A673 (cell line): ENCODE measurements at regions of chr11 and their contacts with region 1.

Region 1: DNA sequence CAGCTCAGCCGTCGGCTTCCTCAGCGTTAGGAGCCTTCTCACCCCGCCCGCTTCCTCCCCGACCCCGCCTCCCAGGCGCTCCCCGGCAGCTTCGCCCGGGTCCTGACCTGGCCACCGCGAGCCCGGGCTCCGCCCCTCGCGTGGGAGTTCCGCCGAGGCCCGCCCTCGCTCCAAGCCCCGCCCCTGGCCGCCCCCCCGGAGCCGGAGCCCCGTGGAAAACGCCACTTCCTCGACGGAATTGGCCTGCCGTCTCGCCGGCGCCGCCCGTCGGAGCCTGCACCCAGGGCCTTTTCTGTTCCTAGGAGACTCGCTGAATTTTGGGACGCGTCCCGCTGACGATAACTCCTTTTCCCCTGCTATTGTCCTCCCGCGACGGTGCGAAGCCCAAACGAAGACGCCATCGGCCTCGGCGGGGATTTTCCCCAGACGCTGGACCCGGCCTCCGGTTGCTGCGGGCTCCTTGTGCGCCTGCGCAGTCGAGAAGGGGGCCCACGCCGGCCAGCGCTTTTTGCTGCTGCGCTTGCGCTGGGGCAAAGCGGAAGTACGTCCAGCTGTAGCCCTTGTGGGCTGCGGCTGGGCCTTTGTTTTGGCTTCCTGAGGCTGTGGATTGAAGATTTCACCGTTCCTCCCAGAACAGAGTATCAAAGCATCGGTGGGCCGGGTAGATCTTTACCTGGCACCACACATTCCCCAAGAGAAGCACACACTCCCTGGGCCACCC is 10.0 kb downstream of the RELA start:
- DNase-seq: peak; percentile 97
- H3K4me3 ChIP-seq: peak overlapping the region; percentile 50
- H3K27ac ChIP-seq: peak overlapping the region; percentile 91
- H3K4me1 ChIP-seq: peaks cover 11% of the 10 kb centered on the region
- H3K27me3 ChIP-seq: no peaks in the 10 kb centered on the region
- CTCF ChIP-seq: no peak

Region 2: GRCh38 chr11:65555693-65556231 is 96.9 kb before region 1 on chr11:
- CTCF ChIA-PET with region 1: no interaction called
- POLR2A ChIA-PET with region 1: interaction called, 11 read pairs
- intact Hi-C with region 1: no loop called
- DNase-seq: no peak
- H3K4me3 ChIP-seq: no peak overlapping the region
- H3K27ac ChIP-seq: no peak overlapping the region
- H3K4me1 ChIP-seq: peaks cover 38% of the 10 kb centered on the region
- H3K27me3 ChIP-seq: no peaks in the 10 kb centered on the region
- CTCF ChIP-seq: no peak

Region 3: GRCh38 chr11:65575568-65576231 is 77.0 kb before region 1 on chr11 and contains the start of gene EHBP1L1:
- CTCF ChIA-PET with region 1: no interaction called
- POLR2A ChIA-PET with region 1: interaction called, 15 read pairs
- intact Hi-C with region 1: no loop called
- DNase-seq: peak; percentile 78
- H3K4me3 ChIP-seq: peak within 1 kb of the TSS; percentile 87
- H3K27ac ChIP-seq: peak within 1 kb of the TSS; percentile 75
- H3K4me1 ChIP-seq: peaks cover 45% of the 10 kb centered on the region
- H3K27me3 ChIP-seq: no peaks in the 10 kb centered on the region
- CTCF ChIP-seq: no peak
- total RNA-seq, gene EHBP1L1: 29.5 and 40.9 TPM in 2 replicates

Region 4: DNA sequence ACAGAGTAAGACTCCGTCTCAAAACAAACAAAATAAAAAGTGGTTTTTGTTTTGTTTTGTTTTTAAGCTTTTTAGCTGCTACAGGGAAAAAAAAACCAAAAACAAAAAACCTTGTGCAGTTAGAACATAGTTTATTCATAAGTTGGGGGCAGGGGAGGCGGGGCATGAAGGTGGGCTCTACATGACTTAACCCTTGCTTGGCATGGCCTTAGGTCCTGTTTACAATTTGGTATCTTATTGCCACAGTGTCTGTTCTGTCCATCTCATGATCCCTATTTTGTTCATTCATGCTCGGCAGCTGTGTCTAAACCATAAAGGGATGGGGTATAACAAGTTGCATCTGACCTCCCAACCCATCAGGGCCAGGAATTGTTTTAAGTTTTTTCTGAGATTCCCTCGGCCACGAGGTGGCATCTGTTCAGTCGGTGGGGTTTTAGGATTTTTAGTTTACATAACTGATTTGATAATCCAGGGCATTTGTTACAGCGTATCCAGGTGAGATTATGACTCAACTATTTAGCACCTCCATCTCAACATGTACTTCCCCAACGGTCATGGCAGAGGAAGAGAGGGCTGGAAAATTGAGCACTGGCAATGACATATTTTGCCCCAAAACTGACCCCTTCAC is 121.2 kb after region 1 on chr11:
- CTCF ChIA-PET with region 1: interaction called, 10 read pairs
- POLR2A ChIA-PET with region 1: no interaction called
- intact Hi-C with region 1: no loop called
- DNase-seq: no peak
- H3K4me3 ChIP-seq: no peak overlapping the region
- H3K27ac ChIP-seq: no peak overlapping the region
- H3K4me1 ChIP-seq: no peaks in the 10 kb centered on the region
- H3K27me3 ChIP-seq: no peaks in the 10 kb centered on the region
- CTCF ChIP-seq: peak; percentile 55